Cardiac septum (tissue), 1 donor: ENCODE measurements at regions of chr1 and their contacts with region 1.

Region 1: DNA sequence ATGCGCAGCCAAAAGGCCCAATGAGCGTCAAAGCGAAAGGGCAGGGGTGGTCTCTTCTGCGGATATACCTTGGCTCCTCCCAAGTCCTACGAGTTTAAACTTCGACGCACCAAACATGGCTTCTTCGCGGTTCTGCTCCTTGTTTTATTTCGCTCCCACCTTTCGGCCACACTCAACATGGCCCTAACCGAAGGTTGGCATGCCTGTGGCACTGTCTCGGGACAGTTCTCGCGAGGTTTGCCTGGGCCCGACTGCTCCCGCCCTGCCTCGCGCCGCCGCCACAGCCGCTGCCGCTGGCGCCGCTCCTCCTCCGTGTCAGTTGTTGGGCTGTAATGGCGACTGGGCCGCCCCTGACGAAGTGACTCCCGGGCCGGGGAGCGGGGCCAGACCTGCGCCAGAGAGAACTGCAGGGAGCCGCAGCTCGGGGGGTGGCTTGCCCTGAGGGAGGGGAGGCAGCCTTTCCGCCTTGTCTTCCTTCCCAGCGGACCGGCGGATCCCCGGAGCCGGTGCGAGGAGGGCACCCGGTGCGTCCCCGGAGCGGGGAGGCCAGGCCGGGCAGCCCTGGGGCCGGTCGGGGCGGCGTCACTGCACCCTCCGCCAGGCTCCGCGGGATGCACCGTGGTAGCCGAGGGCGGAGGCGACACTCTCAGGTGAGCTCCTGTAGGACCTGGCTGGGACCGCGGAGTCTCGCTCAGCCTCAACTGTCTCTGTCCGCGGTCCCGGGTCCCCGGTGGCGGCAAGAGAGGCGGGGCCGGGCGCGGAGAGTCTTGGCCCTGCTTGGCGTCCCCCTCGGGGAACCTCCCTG is at the start of gene CEP350:
- DNase-seq: peak; percentile 98
- total RNA-seq, gene CEP350: 36.6 TPM

Region 2: DNA sequence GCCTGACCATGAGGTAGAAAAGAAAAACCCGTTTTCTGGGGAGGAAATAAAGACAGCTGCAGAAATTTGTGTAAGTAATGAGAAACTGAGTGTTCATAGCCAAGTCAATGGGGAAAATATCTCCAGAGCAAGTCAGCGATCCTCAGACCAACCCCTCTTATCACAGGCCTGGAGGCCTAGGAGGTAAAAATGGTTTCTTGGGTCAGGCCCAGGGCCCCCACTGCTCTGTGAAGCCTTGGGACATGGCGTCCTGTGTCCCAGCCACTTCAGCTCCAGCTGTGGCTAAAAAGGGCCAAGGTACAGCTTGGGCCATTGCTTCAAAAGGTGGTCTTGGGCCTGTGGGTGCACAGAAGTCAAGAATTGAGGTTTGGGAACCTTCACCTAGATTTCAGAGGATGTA is 480.0 kb before region 1 on chr1:
- intact Hi-C with region 1: no loop called
- DNase-seq: no peak

Region 3: GRCh38 chr1:179816196-179816960 is 138.3 kb before region 1 on chr1:
- intact Hi-C with region 1: loop called (anchors 5 kb)
- DNase-seq: no peak

Region 4: DNA sequence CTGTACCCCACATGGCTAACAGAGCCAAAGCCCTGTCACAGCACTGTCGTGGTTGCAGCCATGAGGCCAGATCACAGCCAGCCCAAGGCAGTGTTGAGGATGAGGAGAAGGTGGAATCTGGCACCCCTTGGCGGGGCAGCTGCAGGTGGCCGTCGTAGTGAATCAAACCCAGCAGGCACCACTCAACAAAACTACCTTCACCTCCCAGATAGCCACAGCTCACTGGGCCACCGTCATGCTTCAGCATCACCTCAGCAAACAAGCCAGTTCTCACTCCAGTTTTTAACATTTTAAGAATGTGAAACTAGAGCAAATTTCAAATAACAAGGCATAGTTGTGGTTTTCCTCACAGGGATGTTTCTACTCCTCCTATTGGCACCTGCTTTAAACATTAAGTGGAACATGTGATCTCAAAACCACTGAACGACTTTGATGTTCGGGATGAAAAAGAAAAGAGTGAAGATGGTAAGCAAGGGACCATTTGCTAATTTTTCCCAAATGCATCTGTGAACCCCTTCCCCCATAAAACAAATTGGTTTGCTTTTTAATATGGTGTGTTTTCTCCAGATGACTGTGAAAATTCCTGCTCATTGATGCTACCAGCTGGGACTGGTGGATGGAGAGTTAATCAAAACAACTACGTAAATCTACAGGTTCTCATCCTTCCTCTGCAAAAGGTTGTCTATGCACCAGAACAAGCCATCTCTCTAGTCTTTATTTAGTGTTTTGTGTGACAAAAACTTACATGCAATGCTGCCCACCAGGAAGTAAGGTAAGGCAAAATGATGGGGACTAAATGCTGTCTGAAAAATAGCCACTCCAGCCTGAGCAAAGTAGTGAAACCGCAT is 122.6 kb before region 1 on chr1:
- intact Hi-C with region 1: no loop called
- DNase-seq: no peak

Region 5: GRCh38 chr1:179882243-179883039 is 72.3 kb before region 1 on chr1 and contains the start of gene TOR1AIP1:
- intact Hi-C with region 1: loop called (anchors 1 kb)
- DNase-seq: peak; percentile 98
- total RNA-seq, gene TOR1AIP1: 34.4 TPM

Region 6: GRCh38 chr1:180003026-180003695 is 48.5 kb after region 1 on chr1:
- intact Hi-C with region 1: no loop called
- DNase-seq: no peak

Region 7: DNA sequence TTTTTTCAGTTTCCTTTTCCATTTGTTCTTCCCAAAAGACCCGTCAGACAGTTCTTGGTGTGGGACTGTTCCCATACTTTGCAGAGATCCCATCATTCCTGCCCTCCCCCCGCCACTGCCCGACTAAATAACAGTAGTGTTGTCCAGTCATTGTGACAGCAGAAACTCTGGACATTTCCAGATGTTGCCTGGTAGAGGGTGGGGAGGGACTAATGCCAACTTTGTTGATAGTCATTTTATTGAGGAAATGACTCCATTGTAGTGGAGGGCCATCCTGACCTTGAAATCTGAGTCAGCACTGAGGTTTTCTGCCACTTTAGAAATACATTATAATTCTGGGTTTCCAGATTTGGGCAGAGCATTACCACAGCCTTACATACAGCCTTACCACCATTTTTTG is 85.3 kb after region 1 on chr1:
- intact Hi-C with region 1: no loop called
- DNase-seq: no peak

Region 8: DNA sequence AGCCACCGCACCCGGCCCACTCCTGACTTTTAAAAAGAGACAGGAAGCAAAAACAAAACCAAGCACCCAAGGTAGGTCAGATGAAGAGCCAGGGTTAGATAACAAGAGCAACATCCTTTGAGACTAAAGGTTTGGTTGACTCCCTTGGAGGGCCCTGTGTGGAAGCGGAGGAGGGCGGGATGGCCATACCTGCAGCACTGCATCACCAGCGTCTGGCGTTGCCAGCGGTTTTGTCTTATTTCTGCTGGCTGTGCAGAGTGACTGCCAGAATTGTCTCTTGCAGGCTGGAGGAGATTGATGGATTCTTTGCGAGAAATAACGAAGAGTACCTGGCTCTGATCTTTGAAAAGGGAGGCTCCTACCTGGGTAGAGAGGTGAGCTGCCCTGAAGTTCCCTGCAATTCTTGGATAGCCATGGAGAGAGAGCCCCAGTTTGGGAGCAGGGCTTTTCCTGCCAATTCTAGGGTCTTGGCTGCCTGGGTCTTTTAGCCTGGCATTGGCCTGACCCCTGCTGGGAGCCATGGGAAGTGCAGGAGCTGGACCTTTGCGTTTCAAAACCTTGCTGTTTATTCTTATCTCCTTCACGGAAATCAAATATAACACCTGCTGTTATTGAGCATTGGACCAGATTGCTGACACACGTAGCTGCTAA is 223.9 kb after region 1 on chr1:
- intact Hi-C with region 1: loop called (anchors 10 kb)
- DNase-seq: peak; percentile 86